ENCODE measurements at regions of chr7 and their contacts with region 1.

Region 1: DNA sequence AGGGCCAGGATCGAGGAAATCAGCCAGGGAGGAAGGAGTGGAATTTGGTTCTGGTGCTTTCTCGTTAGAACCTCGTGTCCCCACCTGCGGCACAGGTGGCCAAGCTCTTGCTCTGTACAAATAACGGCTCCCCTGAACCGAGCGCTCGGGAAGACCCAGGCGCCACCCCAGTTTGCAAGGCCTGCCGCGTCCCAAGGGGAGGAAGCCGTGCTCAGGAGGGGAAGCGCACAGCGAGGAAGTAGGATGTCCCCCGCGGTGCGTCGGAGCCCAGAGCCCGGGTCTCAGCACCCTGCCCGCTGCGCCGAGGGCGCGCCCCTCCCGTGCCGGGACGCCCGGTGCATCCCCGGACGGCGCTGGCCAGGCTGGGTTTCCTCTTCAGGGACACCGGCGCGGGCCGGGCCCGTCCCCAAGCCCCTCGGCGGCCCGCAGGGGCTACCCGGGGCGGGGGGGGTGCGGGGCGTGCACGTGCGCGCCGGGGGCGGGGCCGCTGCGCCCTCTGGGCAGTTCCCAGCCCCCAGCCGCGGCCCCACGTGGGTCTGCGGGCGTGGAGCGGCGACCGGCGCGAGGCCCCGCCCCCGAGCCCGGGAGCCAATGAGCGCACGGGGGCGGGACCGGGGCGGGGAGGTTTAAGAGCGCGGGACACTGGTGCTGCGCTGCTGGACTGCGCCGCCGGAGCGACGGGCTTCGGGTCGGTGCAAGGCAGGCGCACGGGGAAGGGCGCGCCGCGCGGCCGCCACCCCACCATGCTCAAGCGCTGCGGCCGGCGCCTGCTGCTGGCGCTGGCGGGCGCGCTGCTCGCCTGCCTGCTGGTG is at the start of gene LFNG:
- DNase-seq: peak; percentile 86
- H3K4me3 ChIP-seq: peak within 1 kb of the TSS; percentile 42 to 79 (median 77)
- H3K27ac ChIP-seq: no peak within 1 kb of the TSS
- H3K4me1 ChIP-seq: peaks cover 61% of the 10 kb centered on the region
- H3K27me3 ChIP-seq: no peaks in the 10 kb centered on the region
- CTCF ChIP-seq: no peak
- total RNA-seq, gene LFNG: 29.7 to 105 TPM

Region 2: GRCh38 chr7:2440608-2441245 is 78.6 kb before region 1 on chr7:
- CTCF ChIA-PET with region 1: no interaction called
- dilution Hi-C with region 1: no loop called
- in situ Hi-C with region 1: no loop called
- intact Hi-C with region 1: no loop called
- DNase-seq: no peak
- H3K4me3 ChIP-seq: no peak overlapping the region
- H3K27ac ChIP-seq: no peak overlapping the region
- H3K4me1 ChIP-seq: no peaks in the 10 kb centered on the region
- H3K27me3 ChIP-seq: no peaks in the 10 kb centered on the region
- CTCF ChIP-seq: no peak

Region 3: GRCh38 chr7:2477447-2478398 is 41.6 kb before region 1 on chr7:
- CTCF ChIA-PET with region 1: no interaction called
- dilution Hi-C with region 1: loop called (anchors 5 kb)
- in situ Hi-C with region 1: no loop called
- intact Hi-C with region 1: loop called (anchors 2 kb)
- DNase-seq: peak; percentile 35
- H3K4me3 ChIP-seq: no peak overlapping the region
- H3K27ac ChIP-seq: no peak overlapping the region
- H3K4me1 ChIP-seq: peaks cover 16% of the 10 kb centered on the region
- H3K27me3 ChIP-seq: no peaks in the 10 kb centered on the region
- CTCF ChIP-seq: peak; percentile 60 to 85

Region 4: GRCh38 chr7:2482725-2483451 is 36.4 kb before region 1 on chr7:
- CTCF ChIA-PET with region 1: no interaction called
- dilution Hi-C with region 1: loop called (anchors 5 kb)
- in situ Hi-C with region 1: no loop called
- intact Hi-C with region 1: loop called (anchors 2 kb)
- DNase-seq: no peak
- H3K4me3 ChIP-seq: no peak overlapping the region
- H3K27ac ChIP-seq: no peak overlapping the region
- H3K4me1 ChIP-seq: peaks cover 10% of the 10 kb centered on the region
- H3K27me3 ChIP-seq: no peaks in the 10 kb centered on the region
- CTCF ChIP-seq: no peak

Region 5: GRCh38 chr7:2508327-2509215 is 10.8 kb before region 1 on chr7:
- CTCF ChIA-PET with region 1: no interaction called
- dilution Hi-C with region 1: no loop called
- in situ Hi-C with region 1: no loop called
- intact Hi-C with region 1: loop called (anchors 1 kb)
- DNase-seq: peak; percentile 68
- H3K4me3 ChIP-seq: peak overlapping the region in 1 of 3 experiments; percentile 6
- H3K27ac ChIP-seq: no peak overlapping the region
- H3K4me1 ChIP-seq: peaks cover 32% of the 10 kb centered on the region
- H3K27me3 ChIP-seq: no peaks in the 10 kb centered on the region
- CTCF ChIP-seq: no peak

Region 6: DNA sequence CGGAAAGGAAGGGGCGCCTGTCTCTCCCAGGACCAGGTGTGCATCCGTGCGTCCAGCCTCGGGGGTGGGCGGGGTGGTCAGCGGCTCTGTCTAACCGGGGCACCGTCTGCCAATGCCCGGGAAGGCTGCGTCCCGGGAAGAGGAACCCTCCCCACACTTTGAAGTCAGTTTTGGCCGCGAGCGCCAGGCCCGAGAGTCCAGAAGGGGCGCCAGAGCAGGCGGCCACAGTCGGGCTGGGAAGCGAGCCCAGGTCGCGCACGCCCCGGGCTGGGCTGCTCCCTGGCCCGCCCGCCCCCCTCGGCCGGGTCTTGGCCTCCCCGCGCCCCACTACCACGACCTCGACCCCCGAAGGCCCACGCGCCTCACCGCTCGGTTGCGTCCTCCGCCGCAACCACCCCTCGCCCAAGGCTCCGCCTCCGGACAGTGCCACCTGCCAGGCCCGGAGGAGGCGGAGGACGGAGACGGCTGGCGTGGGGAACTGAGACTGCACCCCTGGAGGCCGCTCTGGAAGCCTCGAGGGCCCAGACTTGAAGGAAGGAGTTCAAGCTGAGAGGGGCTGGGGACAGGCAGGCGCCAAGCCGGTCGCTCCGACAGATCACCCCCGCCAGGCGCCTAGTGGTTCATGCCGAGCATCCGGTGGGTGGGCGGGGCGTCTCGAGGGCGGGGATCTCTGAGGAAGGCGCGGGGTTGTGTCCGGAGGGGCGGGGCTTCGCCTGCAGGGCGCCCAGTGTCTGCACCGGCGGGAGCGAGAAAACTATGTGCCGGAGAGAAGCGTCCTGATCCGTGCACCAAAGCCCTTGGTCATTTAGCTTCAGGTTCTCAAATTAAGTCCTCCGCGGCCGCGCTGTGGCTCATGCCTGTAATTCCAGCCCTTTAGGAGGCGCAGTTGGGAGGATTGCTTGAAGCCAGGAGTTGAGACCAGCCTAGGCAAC is 36.1 kb after region 1 on chr7 and contains the start of gene BRAT1:
- CTCF ChIA-PET with region 1: no interaction called
- dilution Hi-C with region 1: no loop called
- in situ Hi-C with region 1: no loop called
- intact Hi-C with region 1: loop called (anchors 1 kb)
- DNase-seq: peak; percentile 88
- H3K4me3 ChIP-seq: peak within 1 kb of the TSS; percentile 82 to 97 (median 91)
- H3K27ac ChIP-seq: peak within 1 kb of the TSS; percentile 97
- H3K4me1 ChIP-seq: peaks cover 10% of the 10 kb centered on the region
- H3K27me3 ChIP-seq: no peaks in the 10 kb centered on the region
- CTCF ChIP-seq: peak; percentile 23 to 57
- total RNA-seq, gene BRAT1: 20.5 to 25.3 TPM

Region 7: GRCh38 chr7:2621061-2621828 is 101.9 kb after region 1 on chr7:
- CTCF ChIA-PET with region 1: no interaction called
- dilution Hi-C with region 1: loop called (anchors 5 kb)
- in situ Hi-C with region 1: no loop called
- intact Hi-C with region 1: no loop called
- DNase-seq: no peak
- H3K4me3 ChIP-seq: no peak overlapping the region
- H3K27ac ChIP-seq: no peak overlapping the region
- H3K4me1 ChIP-seq: peaks cover 3% of the 10 kb centered on the region
- H3K27me3 ChIP-seq: no peaks in the 10 kb centered on the region
- CTCF ChIP-seq: no peak

Region 8: GRCh38 chr7:2632733-2633537 is 113.6 kb after region 1 on chr7:
- CTCF ChIA-PET with region 1: no interaction called
- dilution Hi-C with region 1: no loop called
- in situ Hi-C with region 1: no loop called
- intact Hi-C with region 1: loop called (anchors 5 kb)
- DNase-seq: peak; percentile 58
- H3K4me3 ChIP-seq: peak overlapping the region; percentile 65 to 88 (median 68)
- H3K27ac ChIP-seq: peak overlapping the region; percentile 59
- H3K4me1 ChIP-seq: peaks cover 35% of the 10 kb centered on the region
- H3K27me3 ChIP-seq: no peaks in the 10 kb centered on the region
- CTCF ChIP-seq: no peak